ENCODE measurements at regions of chr3 and their contacts with region 1.

Region 1: DNA sequence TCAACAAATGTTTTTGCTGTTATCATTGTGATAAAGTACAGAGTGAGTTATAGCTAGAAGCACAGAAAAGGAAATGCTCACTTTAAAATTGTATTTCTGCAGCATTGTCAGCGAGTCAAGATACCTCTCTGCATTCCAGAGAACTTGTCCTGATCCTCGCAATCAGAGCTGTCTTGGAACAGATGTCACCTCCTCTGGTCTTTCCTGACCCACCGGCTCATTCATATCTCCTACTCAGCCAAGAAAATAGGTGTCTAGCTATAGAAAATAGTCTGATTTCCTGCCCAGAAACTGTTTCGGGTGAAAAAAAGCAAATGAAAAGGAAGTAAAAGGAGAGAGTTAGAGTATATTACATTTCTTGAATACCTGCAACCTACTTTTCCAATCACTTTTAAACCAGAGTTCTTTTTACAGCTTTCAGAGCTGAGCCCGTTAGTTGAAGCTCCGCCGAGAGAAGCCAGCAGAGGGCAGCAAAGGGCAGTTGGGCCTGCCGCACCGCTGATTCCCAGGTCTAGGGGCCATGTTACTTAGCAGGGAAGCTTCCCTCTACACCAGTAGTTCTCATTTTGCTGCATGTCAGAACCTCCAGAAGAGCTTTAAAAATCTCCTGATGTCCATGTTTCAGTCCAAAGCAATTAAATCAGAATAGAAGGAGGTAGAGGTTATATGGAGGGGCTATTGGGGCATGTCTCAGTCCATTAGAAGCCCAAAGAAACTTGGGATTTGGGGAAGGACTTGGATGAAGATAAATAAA is 185.7 kb upstream of the THRB start:
- DNase-seq: peak; percentile 73 to 79 (median 76)
- ATAC-seq: peak; percentile 98
- H3K4me3 ChIP-seq: no peak overlapping the region
- H3K27ac ChIP-seq: no peak overlapping the region
- H3K4me1 ChIP-seq: no peaks in the 10 kb centered on the region
- H3K27me3 ChIP-seq: no peaks in the 10 kb centered on the region; a peak in 1 of 5 replicates
- CTCF ChIP-seq: peak; percentile 80 to 90 (median 88)
- EP300 ChIP-seq: no peak
- POLR2A ChIP-seq: no peak
- RAD21 ChIP-seq: peak; percentile 67 to 74

Region 2: GRCh38 chr3:23999012-23999641 is 681.3 kb before region 1 on chr3:
- CTCF ChIA-PET with region 1: interaction called, 22 read pairs
- POLR2A ChIA-PET with region 1: no interaction called
- in situ Hi-C with region 1: no loop called
- intact Hi-C with region 1: loop called (anchors 1 kb)
- DNase-seq: peak; percentile 55 to 78 (median 58)
- ATAC-seq: peak; percentile 73
- H3K4me3 ChIP-seq: no peak overlapping the region
- H3K27ac ChIP-seq: no peak overlapping the region
- H3K4me1 ChIP-seq: no peaks in the 10 kb centered on the region
- H3K27me3 ChIP-seq: peaks cover 4 to 11% of the 10 kb centered on the region in 2 experiments; a peak in 3 of 5 replicates
- CTCF ChIP-seq: peak; percentile 90 to 98 (median 96)
- EP300 ChIP-seq: no peak
- POLR2A ChIP-seq: no peak
- RAD21 ChIP-seq: peak; percentile 99

Region 3: DNA sequence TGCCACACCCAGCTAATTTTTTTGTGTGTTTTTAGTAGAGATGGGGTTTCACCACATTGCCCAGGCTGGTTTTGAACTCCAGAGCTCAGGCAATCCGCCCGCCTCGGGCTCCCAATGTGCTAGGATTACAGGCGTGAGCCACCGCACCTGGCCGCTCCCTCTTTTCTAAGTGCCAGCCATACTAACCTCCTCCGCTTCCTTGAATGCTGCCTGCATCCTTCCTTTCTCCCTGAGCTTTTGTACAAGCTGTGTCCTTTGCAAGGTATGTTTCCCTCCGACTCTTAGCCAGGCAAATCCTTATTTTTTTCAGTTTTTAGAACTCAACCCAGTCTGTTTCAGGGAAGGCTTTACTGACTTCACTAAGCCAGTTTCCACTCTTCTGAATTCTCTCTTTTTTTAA is 674.7 kb before region 1 on chr3:
- CTCF ChIA-PET with region 1: no interaction called
- POLR2A ChIA-PET with region 1: no interaction called
- in situ Hi-C with region 1: loop called (anchors 5 kb)
- intact Hi-C with region 1: no loop called
- DNase-seq: no peak
- ATAC-seq: no peak
- H3K4me3 ChIP-seq: no peak overlapping the region
- H3K27ac ChIP-seq: no peak overlapping the region
- H3K4me1 ChIP-seq: no peaks in the 10 kb centered on the region
- H3K27me3 ChIP-seq: peaks cover 10 to 13% of the 10 kb centered on the region in 2 experiments; a peak in 3 of 5 replicates
- CTCF ChIP-seq: no peak
- EP300 ChIP-seq: no peak
- POLR2A ChIP-seq: no peak
- RAD21 ChIP-seq: no peak

Region 4: GRCh38 chr3:24069045-24069444 is 611.3 kb before region 1 on chr3:
- CTCF ChIA-PET with region 1: interaction called, 7 read pairs
- POLR2A ChIA-PET with region 1: no interaction called
- in situ Hi-C with region 1: no loop called
- intact Hi-C with region 1: loop called (anchors 2 kb)
- DNase-seq: peak in 1 of 4 experiments; percentile 29
- ATAC-seq: peak; percentile 78
- H3K4me3 ChIP-seq: no peak overlapping the region
- H3K27ac ChIP-seq: no peak overlapping the region
- H3K4me1 ChIP-seq: peaks cover 0 to 2% of the 10 kb centered on the region in 2 experiments; a peak in 1 of 5 replicates
- H3K27me3 ChIP-seq: no peaks in the 10 kb centered on the region; a peak in 2 of 5 replicates
- CTCF ChIP-seq: peak; percentile 49 to 74 (median 57); a peak in 4 of 6 replicates
- EP300 ChIP-seq: no peak
- POLR2A ChIP-seq: no peak
- RAD21 ChIP-seq: peak; percentile 50 to 78

Region 5: DNA sequence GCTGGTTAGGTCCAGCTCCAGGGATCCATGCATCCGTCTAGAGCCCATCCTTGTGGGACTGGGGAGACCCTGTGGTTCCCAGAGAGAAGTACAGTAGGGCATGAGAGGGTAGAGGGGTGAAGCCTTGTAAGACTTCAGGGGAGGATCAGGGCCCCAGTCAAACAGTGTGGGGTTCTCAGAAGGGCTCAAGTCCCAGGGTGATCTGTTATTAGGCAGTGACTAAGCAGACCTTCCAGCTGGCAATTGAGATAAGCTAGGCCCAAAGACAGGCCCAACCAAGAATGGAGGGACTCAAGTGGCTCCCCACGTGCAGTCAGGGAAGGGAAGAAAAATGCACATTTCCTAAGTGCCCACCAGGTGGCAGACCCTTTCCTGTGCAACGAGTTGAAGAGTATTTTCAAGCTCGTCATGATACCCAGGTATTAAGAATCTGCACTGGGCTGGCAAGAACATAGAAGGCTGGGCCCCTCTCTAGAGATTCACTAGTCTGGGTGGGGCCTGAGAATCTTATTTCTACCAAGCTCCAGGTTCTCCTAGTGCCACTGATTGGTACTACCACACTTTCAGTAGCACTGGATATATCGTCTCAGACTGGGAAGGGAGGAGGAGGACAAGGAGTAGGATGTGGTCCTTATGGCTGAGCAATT is 494.5 kb before region 1 on chr3:
- CTCF ChIA-PET with region 1: interaction called, 7 read pairs
- POLR2A ChIA-PET with region 1: no interaction called
- in situ Hi-C with region 1: no loop called
- intact Hi-C with region 1: loop called (anchors 2 kb)
- DNase-seq: peak; percentile 88 to 94 (median 90)
- ATAC-seq: peak; percentile 98
- H3K4me3 ChIP-seq: no peak overlapping the region
- H3K27ac ChIP-seq: peak overlapping the region; percentile 76
- H3K4me1 ChIP-seq: peaks cover 4 to 8% of the 10 kb centered on the region in 2 experiments; a peak in 3 of 5 replicates
- H3K27me3 ChIP-seq: no peaks in the 10 kb centered on the region
- CTCF ChIP-seq: peak; percentile 92 to 93 (median 92)
- EP300 ChIP-seq: peak; percentile 87
- POLR2A ChIP-seq: no peak
- RAD21 ChIP-seq: peak; percentile 61 to 84

Region 6: GRCh38 chr3:24264748-24265158 is 415.6 kb before region 1 on chr3:
- CTCF ChIA-PET with region 1: interaction called, 5 read pairs
- POLR2A ChIA-PET with region 1: no interaction called
- in situ Hi-C with region 1: no loop called
- intact Hi-C with region 1: loop called (anchors 5 kb)
- DNase-seq: peak; percentile 74 to 83 (median 78)
- ATAC-seq: peak; percentile 52
- H3K4me3 ChIP-seq: no peak overlapping the region
- H3K27ac ChIP-seq: no peak overlapping the region
- H3K4me1 ChIP-seq: peaks cover 9 to 24% of the 10 kb centered on the region in 2 experiments; a peak in 4 of 5 replicates
- H3K27me3 ChIP-seq: no peaks in the 10 kb centered on the region
- CTCF ChIP-seq: peak; percentile 71 to 87 (median 85)
- EP300 ChIP-seq: no peak
- POLR2A ChIP-seq: no peak
- RAD21 ChIP-seq: peak; percentile 73 to 82

Region 7: DNA sequence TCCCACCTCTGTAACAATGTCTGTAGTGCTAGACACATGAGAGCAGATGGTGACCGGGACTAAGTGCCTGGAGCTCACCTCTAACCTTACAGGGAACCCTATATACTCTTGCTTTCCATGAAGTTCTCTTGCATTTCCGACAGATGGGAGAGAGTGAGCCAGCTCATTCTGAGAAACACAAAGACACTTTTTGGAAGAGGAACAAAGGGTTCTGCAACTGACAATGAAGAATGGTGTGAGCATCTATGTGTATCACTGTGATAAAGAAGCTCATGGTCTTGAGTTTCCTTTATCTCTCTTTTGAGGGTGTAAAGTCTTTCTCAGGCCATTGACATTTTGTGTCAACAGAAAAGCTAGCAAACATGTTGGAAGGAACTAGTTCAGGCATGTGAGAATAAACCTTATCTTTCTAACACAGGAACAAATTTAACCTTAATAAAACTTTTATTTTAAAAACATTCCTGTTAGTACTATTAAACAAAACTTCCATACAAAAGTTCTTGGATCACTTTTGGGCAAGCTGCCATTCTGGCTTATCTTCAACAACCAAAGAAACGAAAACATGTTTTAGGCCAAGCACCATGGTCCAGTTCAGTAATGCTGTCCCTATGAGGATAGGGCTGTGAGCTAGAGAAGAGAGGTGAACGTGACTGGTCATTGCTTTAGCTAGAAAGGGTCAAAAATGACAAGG is 328.5 kb before region 1 on chr3:
- CTCF ChIA-PET with region 1: no interaction called
- POLR2A ChIA-PET with region 1: no interaction called
- in situ Hi-C with region 1: no loop called
- intact Hi-C with region 1: no loop called
- DNase-seq: peak; percentile 49 to 95 (median 66)
- ATAC-seq: peak; percentile 86
- H3K4me3 ChIP-seq: no peak overlapping the region
- H3K27ac ChIP-seq: peak overlapping the region; percentile 89
- H3K4me1 ChIP-seq: peaks cover 3 to 56% of the 10 kb centered on the region in 2 experiments
- H3K27me3 ChIP-seq: no peaks in the 10 kb centered on the region
- CTCF ChIP-seq: no peak
- EP300 ChIP-seq: peak; percentile 93
- POLR2A ChIP-seq: no peak
- RAD21 ChIP-seq: peak in 1 of 2 experiments; percentile 48; a peak in 2 of 4 replicates

Region 8: GRCh38 chr3:25594007-25594502 is 913.7 kb after region 1 on chr3:
- CTCF ChIA-PET with region 1: interaction called, 4 read pairs
- POLR2A ChIA-PET with region 1: no interaction called
- in situ Hi-C with region 1: no loop called
- intact Hi-C with region 1: loop called (anchors 2 kb)
- DNase-seq: peak; percentile 35 to 68 (median 63)
- ATAC-seq: peak; percentile 69
- H3K4me3 ChIP-seq: no peak overlapping the region
- H3K27ac ChIP-seq: no peak overlapping the region
- H3K4me1 ChIP-seq: peaks cover 0 to 18% of the 10 kb centered on the region in 2 experiments; a peak in 2 of 5 replicates
- H3K27me3 ChIP-seq: no peaks in the 10 kb centered on the region
- CTCF ChIP-seq: peak; percentile 59 to 79 (median 67); a peak in 5 of 6 replicates
- EP300 ChIP-seq: no peak
- POLR2A ChIP-seq: no peak
- RAD21 ChIP-seq: peak; percentile 61 to 66